HCT116 (cell line): ENCODE measurements at regions of chr20 and their contacts with region 1.

Region 1: DNA sequence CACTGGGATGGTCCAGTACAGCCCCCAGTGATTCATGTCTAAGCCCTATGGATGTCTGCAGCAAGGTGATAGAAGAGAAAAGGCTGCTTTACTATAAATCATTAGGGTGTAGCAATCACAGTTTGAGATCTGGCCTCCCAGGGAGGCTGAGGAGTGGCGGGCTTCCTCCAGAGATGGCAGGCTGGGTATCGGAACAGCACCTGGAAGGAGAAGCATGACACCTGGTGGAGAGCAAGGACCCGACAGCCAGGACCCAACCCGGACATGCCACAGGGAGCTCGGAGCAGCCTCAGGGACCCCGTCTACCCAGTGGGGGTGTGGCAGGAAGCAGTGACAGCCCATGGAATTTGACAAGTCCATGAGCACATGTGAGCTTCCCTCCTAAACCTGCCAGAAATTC is 114.8 kb upstream of the CD93 start:
- DNase-seq: peak; percentile 48
- ATAC-seq: peak; percentile 99
- H3K4me3 ChIP-seq: no peak overlapping the region
- H3K27ac ChIP-seq: no peak overlapping the region
- H3K4me1 ChIP-seq: no peaks in the 10 kb centered on the region
- H3K27me3 ChIP-seq: peaks cover 33% of the 10 kb centered on the region
- CTCF ChIP-seq: peak; percentile 72 to 83 (median 81)
- POLR2A ChIP-seq: no peak
- RAD21 ChIP-seq: peak; percentile 91

Region 2: GRCh38 chr20:22732753-22733152 is 468.2 kb before region 1 on chr20:
- CTCF ChIA-PET with region 1: interaction called, 4 read pairs
- POLR2A ChIA-PET with region 1: no interaction called
- RAD21 ChIA-PET with region 1: no interaction called
- intact Hi-C with region 1: loop called (anchors 1 kb)
- DNase-seq: no peak
- ATAC-seq: no peak
- H3K4me3 ChIP-seq: no peak overlapping the region
- H3K27ac ChIP-seq: no peak overlapping the region
- H3K4me1 ChIP-seq: peaks cover 0 to 12% of the 10 kb centered on the region in 2 experiments; a peak in 1 of 4 replicates
- H3K27me3 ChIP-seq: no peaks in the 10 kb centered on the region
- CTCF ChIP-seq: 0 out of 6 replicates have a peak, but pooled peaks of 1 of the 3 experiments have one; percentile 3
- POLR2A ChIP-seq: no peak
- RAD21 ChIP-seq: no peak

Region 3: GRCh38 chr20:22846863-22847262 is 354.1 kb before region 1 on chr20:
- CTCF ChIA-PET with region 1: interaction called, 5 read pairs
- POLR2A ChIA-PET with region 1: no interaction called
- RAD21 ChIA-PET with region 1: interaction called, 3 read pairs
- intact Hi-C with region 1: loop called (anchors 5 kb)
- DNase-seq: no peak
- ATAC-seq: no peak
- H3K4me3 ChIP-seq: no peak overlapping the region
- H3K27ac ChIP-seq: no peak overlapping the region
- H3K4me1 ChIP-seq: no peaks in the 10 kb centered on the region
- H3K27me3 ChIP-seq: peaks cover 27% of the 10 kb centered on the region
- CTCF ChIP-seq: no peak
- POLR2A ChIP-seq: no peak
- RAD21 ChIP-seq: no peak

Region 4: GRCh38 chr20:22974353-22974752 is 226.6 kb before region 1 on chr20:
- CTCF ChIA-PET with region 1: interaction called, 6 read pairs
- POLR2A ChIA-PET with region 1: no interaction called
- RAD21 ChIA-PET with region 1: no interaction called
- intact Hi-C with region 1: loop called (anchors 2 kb)
- DNase-seq: peak; percentile 18
- ATAC-seq: peak; percentile 78
- H3K4me3 ChIP-seq: no peak overlapping the region
- H3K27ac ChIP-seq: no peak overlapping the region
- H3K4me1 ChIP-seq: no peaks in the 10 kb centered on the region
- H3K27me3 ChIP-seq: peaks cover 50% of the 10 kb centered on the region
- CTCF ChIP-seq: peak; percentile 38 to 69 (median 66); a peak in 5 of 6 replicates
- POLR2A ChIP-seq: no peak
- RAD21 ChIP-seq: peak; percentile 47

Region 5: DNA sequence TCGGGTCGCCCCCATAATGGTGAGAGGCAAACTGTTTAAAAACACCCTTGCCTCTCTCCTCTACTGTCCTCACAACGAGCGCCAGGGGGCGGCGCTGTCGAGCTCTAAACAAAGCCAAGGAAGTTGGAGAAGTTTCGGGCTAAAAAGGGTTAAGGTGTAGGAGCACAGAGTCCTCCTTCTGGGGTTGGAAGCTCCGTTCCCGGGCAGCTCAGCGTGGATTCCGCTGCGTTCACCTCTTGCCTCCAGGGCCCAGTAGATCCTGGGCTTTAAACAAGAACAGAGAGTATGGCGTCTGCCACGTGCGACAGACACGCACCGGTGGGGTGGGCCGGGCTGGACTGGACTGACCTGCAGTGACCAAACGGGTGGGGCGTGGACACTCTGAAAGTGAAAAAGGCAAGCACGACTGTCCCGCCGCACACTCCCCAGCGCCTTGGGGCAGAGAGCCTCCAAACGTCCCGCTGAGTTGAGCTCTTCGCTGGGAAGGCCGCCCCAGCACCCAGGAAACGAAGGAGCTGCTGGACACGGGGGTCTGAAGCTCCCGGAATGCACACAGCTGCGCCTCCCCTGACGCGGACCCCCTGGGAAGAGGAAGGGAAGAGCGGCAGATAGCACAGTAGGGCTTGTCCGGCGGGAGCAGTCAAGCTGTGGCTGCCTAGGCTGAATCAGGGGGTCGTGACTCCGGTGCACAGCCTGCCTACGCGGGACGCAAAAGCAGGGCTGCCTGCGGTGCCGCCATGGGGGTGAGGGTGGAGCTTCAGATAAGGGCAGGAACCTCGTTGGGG is 149.9 kb before region 1 on chr20:
- CTCF ChIA-PET with region 1: interaction called, 47 read pairs
- POLR2A ChIA-PET with region 1: interaction called, 4 read pairs
- RAD21 ChIA-PET with region 1: interaction called, 7 to 18 read pairs
- intact Hi-C with region 1: loop called (anchors 1 kb)
- DNase-seq: peak; percentile 42
- ATAC-seq: peak; percentile 69
- H3K4me3 ChIP-seq: peak overlapping the region; percentile 51 to 67
- H3K27ac ChIP-seq: no peak overlapping the region
- H3K4me1 ChIP-seq: peaks cover 3 to 31% of the 10 kb centered on the region in 2 experiments; a peak in 3 of 4 replicates
- H3K27me3 ChIP-seq: peaks cover 12% of the 10 kb centered on the region; the same call in 1 of the 2 replicates
- CTCF ChIP-seq: peak; percentile 54 to 73 (median 70); a peak in 5 of 6 replicates
- POLR2A ChIP-seq: no peak
- RAD21 ChIP-seq: peak; percentile 73

Region 6: DNA sequence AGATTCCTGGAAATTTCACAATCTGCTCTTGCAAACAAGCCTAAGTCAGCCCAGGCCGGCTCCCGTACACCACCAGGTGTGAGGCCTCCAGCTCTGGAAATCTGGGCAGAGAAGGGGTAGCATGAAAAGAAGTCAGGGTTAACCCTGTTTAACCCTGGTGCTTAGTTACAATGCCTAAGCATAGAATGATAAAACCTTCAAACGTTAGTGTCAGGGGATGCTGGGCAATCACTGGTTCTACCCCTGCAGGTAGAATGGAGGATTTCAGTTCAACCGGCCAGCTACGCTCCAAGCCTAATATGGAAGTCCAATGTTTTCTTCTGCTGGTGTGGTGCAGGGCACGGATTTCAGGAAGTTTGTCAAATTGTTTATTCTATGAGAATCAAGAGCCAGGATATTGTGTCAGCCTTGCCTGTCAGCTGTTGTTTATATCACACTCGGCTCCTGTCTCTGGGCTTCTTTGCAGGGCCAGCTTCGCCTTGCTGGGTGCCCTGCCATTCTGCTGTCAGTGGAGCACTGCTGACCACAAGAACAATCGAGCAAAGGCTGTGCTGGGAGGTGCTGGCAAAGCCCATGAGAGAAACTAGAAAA is 94.6 kb before region 1 on chr20:
- CTCF ChIA-PET with region 1: no interaction called
- POLR2A ChIA-PET with region 1: no interaction called
- RAD21 ChIA-PET with region 1: no interaction called
- intact Hi-C with region 1: no loop called
- DNase-seq: no peak
- ATAC-seq: peak; percentile 46; the same call in 1 of the 2 replicates
- H3K4me3 ChIP-seq: no peak overlapping the region
- H3K27ac ChIP-seq: no peak overlapping the region
- H3K4me1 ChIP-seq: no peaks in the 10 kb centered on the region
- H3K27me3 ChIP-seq: no peaks in the 10 kb centered on the region
- CTCF ChIP-seq: peak in 1 of 3 experiments; percentile 5; a peak in 1 of 6 replicates
- POLR2A ChIP-seq: no peak
- RAD21 ChIP-seq: no peak

Region 7: GRCh38 chr20:23287354-23288190 is 86.7 kb after region 1 on chr20:
- CTCF ChIA-PET with region 1: no interaction called
- POLR2A ChIA-PET with region 1: no interaction called
- RAD21 ChIA-PET with region 1: no interaction called
- intact Hi-C with region 1: no loop called
- DNase-seq: no peak
- ATAC-seq: no peak
- H3K4me3 ChIP-seq: no peak overlapping the region
- H3K27ac ChIP-seq: no peak overlapping the region
- H3K4me1 ChIP-seq: no peaks in the 10 kb centered on the region
- H3K27me3 ChIP-seq: peaks cover 46% of the 10 kb centered on the region
- CTCF ChIP-seq: no peak
- POLR2A ChIP-seq: no peak
- RAD21 ChIP-seq: no peak